ENCODE measurements at regions of chr2 and their contacts with region 1.

Region 1: DNA sequence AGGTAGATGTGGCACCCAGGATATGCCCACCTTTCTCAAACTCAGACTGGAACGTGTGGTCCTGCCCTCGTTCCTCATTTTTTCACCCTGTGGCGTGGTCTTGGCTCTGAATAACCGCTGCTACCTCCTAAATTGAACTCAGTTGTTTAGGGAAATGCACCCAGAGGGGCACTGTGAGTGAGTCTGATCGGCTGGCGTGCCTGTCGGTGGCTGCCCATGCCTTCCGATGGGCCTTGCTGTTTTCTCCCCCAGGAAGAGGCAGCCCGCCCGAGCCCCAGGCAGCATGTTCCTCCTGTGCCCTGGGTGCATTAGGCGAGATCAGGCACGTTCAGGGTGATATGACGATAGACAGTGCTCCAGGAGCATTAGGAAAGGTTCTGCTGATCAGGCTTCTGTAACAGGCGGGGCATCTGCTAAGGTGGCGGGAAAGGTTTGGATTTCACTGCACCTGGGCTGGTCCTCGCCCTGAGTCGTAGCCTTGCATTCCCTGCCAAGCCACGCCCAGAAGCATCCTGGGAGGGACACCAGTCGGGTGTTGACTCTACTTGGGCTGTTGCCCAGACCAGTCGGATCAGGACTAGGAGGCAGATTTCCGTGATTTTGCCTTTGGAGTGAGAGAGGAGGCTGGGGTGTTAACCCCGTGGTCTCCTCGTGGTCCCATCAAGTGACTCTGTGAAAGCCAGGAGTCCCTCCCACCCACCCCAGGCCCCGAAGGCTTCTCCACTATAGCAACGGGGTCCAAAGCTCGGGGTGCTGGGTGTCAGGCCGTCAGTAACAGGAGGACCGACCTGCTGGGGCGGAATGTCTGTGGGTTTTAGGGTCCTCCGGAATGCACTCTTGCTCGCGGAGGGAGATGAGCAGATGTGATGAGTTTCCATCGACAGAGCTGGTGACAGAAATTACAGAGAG is 75.1 kb downstream of the SH3BP4 start:
- DNase-seq: peak; percentile 93
- H3K4me3 Mint-ChIP-seq: peak overlapping the region; percentile 87
- H3K27ac Mint-ChIP-seq: peak overlapping the region; percentile 99
- H3K4me1 Mint-ChIP-seq: peaks cover 78% of the 10 kb centered on the region
- H3K27me3 Mint-ChIP-seq: no peaks in the 10 kb centered on the region
- CTCF ChIP-seq: no peak

Region 2: GRCh38 chr2:234963773-234964615 is 62.9 kb before region 1 on chr2:
- CTCF ChIA-PET with region 1: no interaction called
- intact Hi-C with region 1: loop called (anchors 5 kb)
- DNase-seq: no peak
- H3K4me3 Mint-ChIP-seq: no peak overlapping the region
- H3K27ac Mint-ChIP-seq: no peak overlapping the region
- H3K4me1 Mint-ChIP-seq: peaks cover 6% of the 10 kb centered on the region
- H3K27me3 Mint-ChIP-seq: no peaks in the 10 kb centered on the region
- CTCF ChIP-seq: no peak

Region 3: GRCh38 chr2:234981197-234982117 is 45.4 kb before region 1 on chr2:
- CTCF ChIA-PET with region 1: no interaction called
- intact Hi-C with region 1: loop called (anchors 2 kb)
- DNase-seq: peak; percentile 78
- H3K4me3 Mint-ChIP-seq: peak overlapping the region; percentile 67
- H3K27ac Mint-ChIP-seq: peak overlapping the region; percentile 93
- H3K4me1 Mint-ChIP-seq: peaks cover 73% of the 10 kb centered on the region
- H3K27me3 Mint-ChIP-seq: no peaks in the 10 kb centered on the region
- CTCF ChIP-seq: no peak

Measured in Calu3 (cell line).